ENCODE measurements at regions of chr1 and their contacts with region 1.

Region 1: DNA sequence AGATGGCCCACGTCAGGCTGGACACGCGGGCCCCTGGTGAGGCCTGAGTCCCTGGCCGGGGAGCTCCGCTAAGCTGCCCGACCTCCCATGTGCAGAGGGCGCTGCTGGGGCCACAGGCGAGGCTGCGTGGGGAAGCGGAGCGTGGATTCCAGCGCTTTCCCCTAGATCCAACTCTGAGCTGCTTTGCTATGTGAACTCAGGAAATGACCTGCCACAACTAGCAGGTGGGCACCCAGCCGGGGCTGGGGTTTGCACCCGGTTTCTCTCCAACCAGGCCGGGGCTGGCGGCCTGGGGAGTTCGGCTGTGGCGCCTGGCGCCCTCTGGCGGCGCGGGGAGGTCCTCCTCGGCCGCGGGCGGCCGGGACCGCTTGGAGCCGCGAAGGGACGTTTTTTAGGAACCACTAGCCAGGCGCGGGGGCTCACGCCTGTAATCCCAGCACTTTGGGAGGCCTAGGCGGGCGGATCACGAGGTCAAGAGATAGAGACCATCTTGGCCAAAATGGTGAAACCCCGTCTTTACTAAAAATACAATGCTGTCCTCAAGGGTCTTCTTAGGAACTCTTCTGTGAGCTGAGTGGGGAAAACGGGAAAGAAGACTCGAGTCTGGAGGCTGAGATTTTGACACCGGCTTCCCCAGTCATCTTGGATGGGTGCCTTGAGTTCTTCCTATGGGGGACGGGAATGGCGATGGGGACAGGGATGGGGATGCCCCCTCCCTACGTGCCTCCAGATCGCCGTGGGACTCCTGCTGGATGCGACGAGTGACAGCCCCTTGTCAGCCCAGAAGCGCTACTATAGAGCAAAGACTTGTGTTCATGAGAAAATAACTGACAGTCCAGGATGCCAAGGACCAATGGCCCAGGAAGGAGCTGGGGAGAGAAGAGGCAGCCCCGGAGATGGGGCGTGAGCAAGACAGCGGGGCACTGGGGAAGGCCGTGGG is 12.6 kb downstream of the PYCR2 start:
- DNase-seq: peak; percentile 73 to 90 (median 89)
- ATAC-seq: peak; percentile 91
- H3K4me3 ChIP-seq: no peak overlapping the region
- H3K27ac ChIP-seq: no peak overlapping the region
- H3K4me1 ChIP-seq: no peaks in the 10 kb centered on the region
- H3K27me3 ChIP-seq: no peaks in the 10 kb centered on the region

Region 2: GRCh38 chr1:225794954-225795353 is 116.5 kb before region 1 on chr1:
- intact Hi-C with region 1: loop called in 1 of 4 experiments (anchors 10 kb)
- DNase-seq: no peak
- ATAC-seq: no peak
- H3K4me3 ChIP-seq: no peak overlapping the region
- H3K27ac ChIP-seq: no peak overlapping the region
- H3K4me1 ChIP-seq: no peaks in the 10 kb centered on the region
- H3K27me3 ChIP-seq: no peaks in the 10 kb centered on the region

Region 3: DNA sequence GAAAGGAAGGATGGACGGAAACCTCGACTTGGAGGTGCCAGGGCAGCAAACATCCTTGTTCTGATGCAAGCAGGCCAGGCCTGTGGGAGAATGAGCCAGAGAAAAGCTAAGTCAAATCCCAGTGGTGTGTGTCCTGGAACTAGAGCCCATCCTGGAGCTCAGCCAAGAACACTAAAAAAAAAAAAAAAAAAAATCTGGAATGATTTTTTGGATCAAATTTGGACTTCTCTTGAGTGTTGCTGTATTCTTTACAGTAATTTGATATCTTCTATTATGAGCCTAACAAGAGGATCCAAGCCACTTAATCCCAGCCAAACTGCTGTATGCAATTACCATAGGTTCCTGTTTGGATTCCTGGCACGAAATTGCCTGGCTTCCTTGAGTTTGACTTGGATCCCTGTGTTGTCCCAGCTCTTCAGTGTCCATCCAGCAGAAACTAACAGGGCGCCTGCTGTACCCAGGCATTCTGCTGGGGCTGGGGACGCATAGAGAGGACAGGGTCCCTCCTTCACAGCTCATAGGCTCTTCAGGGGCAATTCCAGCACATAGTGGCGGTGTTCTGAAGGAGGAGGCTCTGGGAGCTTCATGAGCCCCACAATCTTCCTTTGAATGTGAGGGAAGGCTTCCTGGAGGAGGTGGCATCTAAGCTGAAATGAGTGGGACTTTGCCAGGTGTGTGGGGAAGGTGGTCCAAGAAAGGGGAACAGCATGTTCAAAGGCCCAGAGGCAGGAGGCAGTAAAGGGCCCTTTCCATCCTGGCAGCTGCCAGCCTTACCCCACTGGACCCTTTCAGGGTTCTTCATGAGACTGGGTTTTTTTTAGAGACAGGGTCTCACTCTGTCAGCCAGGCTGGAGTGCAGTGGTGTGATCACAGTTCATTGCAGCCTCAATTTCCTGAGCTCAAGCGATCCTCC is 76.8 kb before region 1 on chr1:
- intact Hi-C with region 1: no loop called
- DNase-seq: peak; percentile 83 to 90 (median 90)
- ATAC-seq: peak; percentile 86 to 94
- H3K4me3 ChIP-seq: no peak overlapping the region
- H3K27ac ChIP-seq: peak overlapping the region; percentile 87
- H3K4me1 ChIP-seq: peaks cover 3% of the 10 kb centered on the region
- H3K27me3 ChIP-seq: no peaks in the 10 kb centered on the region

Region 4: DNA sequence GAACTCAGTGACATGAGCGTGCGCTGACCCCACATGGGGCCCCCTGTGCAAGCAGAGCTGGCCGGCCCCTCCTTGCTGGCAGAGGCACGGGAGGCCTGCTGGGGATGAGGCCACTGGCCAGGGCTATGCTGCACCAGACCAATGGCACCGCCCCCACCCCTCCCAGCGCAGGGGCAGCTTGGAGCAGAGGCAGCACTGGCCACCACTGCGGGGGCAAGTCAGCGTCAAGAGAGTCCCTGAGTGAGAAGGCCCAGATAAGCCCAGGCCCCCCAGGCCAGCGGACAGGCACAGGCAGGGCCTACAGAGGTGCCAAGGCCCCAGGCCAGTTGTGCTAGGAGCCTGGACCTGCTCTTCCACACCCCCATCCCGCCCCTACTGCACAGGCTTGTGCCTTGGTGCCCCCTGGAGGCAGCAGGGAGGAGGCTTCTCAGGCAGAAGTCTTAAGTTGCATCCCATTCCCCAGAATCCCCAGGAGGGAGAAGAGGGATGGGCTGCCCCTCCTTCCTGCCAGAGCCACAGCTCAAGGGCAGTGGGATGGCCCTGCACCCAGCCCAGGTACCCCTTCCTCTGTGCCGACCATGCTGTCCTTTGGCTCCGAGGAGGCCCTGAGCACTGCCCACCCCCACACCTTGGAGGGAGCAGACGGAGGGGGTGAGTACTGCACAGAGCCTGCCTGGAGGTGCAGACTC is 65.7 kb before region 1 on chr1:
- intact Hi-C with region 1: no loop called
- DNase-seq: peak; percentile 88 to 94 (median 91)
- ATAC-seq: peak; percentile 78 to 82
- H3K4me3 ChIP-seq: no peak overlapping the region
- H3K27ac ChIP-seq: no peak overlapping the region
- H3K4me1 ChIP-seq: no peaks in the 10 kb centered on the region
- H3K27me3 ChIP-seq: no peaks in the 10 kb centered on the region